Activated CD4-positive, alpha-beta T cell treated with anti-CD3 and anti-CD28 coated beads for 36 hours (primary cell): ENCODE measurements at regions of chr19 and their contacts with region 1.

Region 1: DNA sequence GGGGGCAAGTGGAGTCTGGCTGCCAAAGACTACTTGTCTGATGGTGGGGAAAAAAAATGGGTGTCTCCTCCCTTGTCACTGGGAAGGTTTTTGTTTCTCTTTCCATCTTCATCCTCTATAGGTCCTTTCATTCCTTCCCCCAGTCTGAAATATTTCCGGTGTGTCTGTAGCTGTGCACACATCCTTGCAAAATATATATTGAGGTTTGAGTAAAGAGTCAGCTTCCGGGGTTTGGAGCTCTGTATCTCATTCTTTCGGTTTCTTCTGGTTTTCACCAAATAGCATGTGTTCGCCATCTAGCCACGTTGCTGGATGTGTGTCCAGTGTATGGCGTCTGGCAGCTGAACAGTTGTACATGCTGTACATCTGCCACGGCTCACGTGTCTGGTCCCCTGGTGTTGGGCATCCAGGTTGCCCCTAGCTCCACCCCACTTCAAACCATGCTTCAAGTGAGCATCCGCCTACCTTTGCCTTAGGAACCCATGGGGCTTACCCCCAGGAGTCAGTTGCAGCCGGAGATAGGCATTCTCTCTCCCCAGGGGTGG is 142.2 kb downstream of the SIPA1L3 start:
- DNase-seq: peak; percentile 73
- ATAC-seq: peak; percentile 91
- H3K4me3 Mint-ChIP-seq: peak overlapping the region; percentile 67
- H3K27ac Mint-ChIP-seq: peak overlapping the region; percentile 97
- H3K4me1 Mint-ChIP-seq: peaks cover 47% of the 10 kb centered on the region
- H3K27me3 Mint-ChIP-seq: no peaks in the 10 kb centered on the region

Region 2: GRCh38 chr19:37893845-37894575 is 155.2 kb before region 1 on chr19:
- CTCF ChIA-PET with region 1: no interaction called
- POLR2A ChIA-PET with region 1: no interaction called
- intact Hi-C with region 1: no loop called
- DNase-seq: no peak
- ATAC-seq: no peak
- H3K4me3 Mint-ChIP-seq: no peak overlapping the region
- H3K27ac Mint-ChIP-seq: no peak overlapping the region
- H3K4me1 Mint-ChIP-seq: peaks cover 3% of the 10 kb centered on the region
- H3K27me3 Mint-ChIP-seq: peaks cover 8% of the 10 kb centered on the region

Region 3: GRCh38 chr19:38004521-38005223 is 44.5 kb before region 1 on chr19:
- CTCF ChIA-PET with region 1: no interaction called
- POLR2A ChIA-PET with region 1: no interaction called
- intact Hi-C with region 1: loop called (anchors 1 to 5 kb)
- DNase-seq: peak; percentile 41
- ATAC-seq: peak; percentile 51
- H3K4me3 Mint-ChIP-seq: no peak overlapping the region
- H3K27ac Mint-ChIP-seq: no peak overlapping the region
- H3K4me1 Mint-ChIP-seq: peaks cover 7% of the 10 kb centered on the region
- H3K27me3 Mint-ChIP-seq: no peaks in the 10 kb centered on the region

Region 4: GRCh38 chr19:38061294-38061693 is 12.1 kb after region 1 on chr19:
- CTCF ChIA-PET with region 1: interaction called, 10 read pairs
- POLR2A ChIA-PET with region 1: interaction called, 10 read pairs
- intact Hi-C with region 1: loop called in 1 of 2 experiments (anchors 1 kb)
- DNase-seq: no peak
- ATAC-seq: no peak
- H3K4me3 Mint-ChIP-seq: no peak overlapping the region
- H3K27ac Mint-ChIP-seq: no peak overlapping the region
- H3K4me1 Mint-ChIP-seq: peaks cover 11% of the 10 kb centered on the region
- H3K27me3 Mint-ChIP-seq: no peaks in the 10 kb centered on the region

Region 5: GRCh38 chr19:38277969-38278680 is 228.9 kb after region 1 on chr19:
- CTCF ChIA-PET with region 1: no interaction called
- POLR2A ChIA-PET with region 1: no interaction called
- intact Hi-C with region 1: no loop called
- DNase-seq: no peak
- ATAC-seq: no peak
- H3K4me3 Mint-ChIP-seq: no peak overlapping the region
- H3K27ac Mint-ChIP-seq: no peak overlapping the region
- H3K4me1 Mint-ChIP-seq: peaks cover 13% of the 10 kb centered on the region
- H3K27me3 Mint-ChIP-seq: no peaks in the 10 kb centered on the region